ENCODE measurements at regions of chr5 and their contacts with region 1.

Region 1: GRCh38 chr5:67133776-67134175 is 62.8 kb downstream of the CD180 start:
- DNase-seq: no peak
- H3K4me3 ChIP-seq: no peak overlapping the region
- H3K27ac ChIP-seq: no peak overlapping the region
- H3K4me1 ChIP-seq: no peaks in the 10 kb centered on the region
- H3K27me3 ChIP-seq: no peaks in the 10 kb centered on the region
- CTCF ChIP-seq: no peak

Region 2: GRCh38 chr5:67059744-67060490 is 73.9 kb before region 1 on chr5:
- CTCF ChIA-PET with region 1: no interaction called
- POLR2A ChIA-PET with region 1: interaction called, 15 read pairs
- intact Hi-C with region 1: no loop called
- DNase-seq: no peak
- H3K4me3 ChIP-seq: no peak overlapping the region
- H3K27ac ChIP-seq: no peak overlapping the region; the same call in 1 of the 2 replicates
- H3K4me1 ChIP-seq: 0 out of 2 replicates have a peak, but pooled peaks cover 3% of the 10 kb centered on the region
- H3K27me3 ChIP-seq: no peaks in the 10 kb centered on the region
- CTCF ChIP-seq: no peak

Region 3: GRCh38 chr5:67106626-67107342 is 27.0 kb before region 1 on chr5:
- CTCF ChIA-PET with region 1: no interaction called
- POLR2A ChIA-PET with region 1: no interaction called
- intact Hi-C with region 1: loop called (anchors 1 kb)
- DNase-seq: no peak
- H3K4me3 ChIP-seq: no peak overlapping the region
- H3K27ac ChIP-seq: no peak overlapping the region
- H3K4me1 ChIP-seq: peaks cover 14% of the 10 kb centered on the region
- H3K27me3 ChIP-seq: no peaks in the 10 kb centered on the region
- CTCF ChIP-seq: no peak

Region 4: GRCh38 chr5:67361932-67362729 is 228.4 kb after region 1 on chr5:
- CTCF ChIA-PET with region 1: no interaction called
- POLR2A ChIA-PET with region 1: no interaction called
- intact Hi-C with region 1: no loop called
- DNase-seq: no peak
- H3K4me3 ChIP-seq: no peak overlapping the region
- H3K27ac ChIP-seq: no peak overlapping the region
- H3K4me1 ChIP-seq: no peaks in the 10 kb centered on the region
- H3K27me3 ChIP-seq: no peaks in the 10 kb centered on the region
- CTCF ChIP-seq: no peak

Region 5: DNA sequence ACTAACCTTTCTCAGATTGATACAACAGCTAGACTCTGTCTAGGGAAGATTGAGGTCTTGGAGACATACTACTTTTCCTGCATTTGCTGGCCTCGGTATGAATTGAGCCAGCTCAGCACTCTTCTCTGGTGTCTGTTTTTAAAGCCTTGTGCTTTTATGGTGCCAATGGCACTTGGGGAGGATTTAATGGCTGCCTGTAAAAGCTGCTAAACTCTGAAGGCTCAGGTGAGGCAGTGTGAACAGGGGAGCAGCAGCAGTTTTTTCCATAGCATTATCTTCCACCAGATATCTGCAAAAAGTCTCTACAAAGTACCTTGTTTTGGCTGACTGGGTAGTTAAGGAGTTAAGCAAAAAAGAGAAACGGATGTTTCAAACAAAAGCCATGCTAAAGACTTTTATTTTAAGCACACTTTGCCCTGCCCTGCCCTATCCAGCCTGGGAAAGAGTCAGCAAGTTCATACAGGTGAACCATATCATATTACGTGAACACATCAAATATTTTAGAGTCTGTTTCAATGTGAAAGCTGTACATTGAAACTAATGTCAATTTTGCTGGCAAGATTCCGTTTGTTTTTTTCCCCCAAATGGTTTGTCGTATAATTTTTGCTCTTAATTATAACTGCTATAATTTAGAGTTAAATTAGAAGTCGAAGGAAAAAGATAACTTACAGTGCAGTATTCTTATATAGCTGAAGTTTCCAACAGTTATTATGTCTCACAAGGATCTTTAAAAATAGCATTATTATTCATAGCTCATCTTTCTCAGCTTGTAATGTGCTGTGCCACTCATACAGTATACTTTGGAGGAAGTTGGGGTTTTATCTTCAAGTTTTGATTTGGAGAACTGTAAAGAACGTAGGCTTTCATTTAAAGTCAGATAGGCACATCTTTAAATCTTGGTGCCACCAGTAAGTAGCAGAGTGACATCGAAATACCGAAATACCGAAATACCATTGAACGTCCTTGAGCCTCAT is 486.9 kb after region 1 on chr5:
- CTCF ChIA-PET with region 1: no interaction called
- POLR2A ChIA-PET with region 1: no interaction called
- intact Hi-C with region 1: no loop called
- DNase-seq: no peak
- H3K4me3 ChIP-seq: no peak overlapping the region
- H3K27ac ChIP-seq: no peak overlapping the region
- H3K4me1 ChIP-seq: no peaks in the 10 kb centered on the region
- H3K27me3 ChIP-seq: no peaks in the 10 kb centered on the region
- CTCF ChIP-seq: no peak

Measured in PC-9 (cell line).